GM18951 (cell line): ENCODE measurements at regions of chr1 and their contacts with region 1.

Region 1: DNA sequence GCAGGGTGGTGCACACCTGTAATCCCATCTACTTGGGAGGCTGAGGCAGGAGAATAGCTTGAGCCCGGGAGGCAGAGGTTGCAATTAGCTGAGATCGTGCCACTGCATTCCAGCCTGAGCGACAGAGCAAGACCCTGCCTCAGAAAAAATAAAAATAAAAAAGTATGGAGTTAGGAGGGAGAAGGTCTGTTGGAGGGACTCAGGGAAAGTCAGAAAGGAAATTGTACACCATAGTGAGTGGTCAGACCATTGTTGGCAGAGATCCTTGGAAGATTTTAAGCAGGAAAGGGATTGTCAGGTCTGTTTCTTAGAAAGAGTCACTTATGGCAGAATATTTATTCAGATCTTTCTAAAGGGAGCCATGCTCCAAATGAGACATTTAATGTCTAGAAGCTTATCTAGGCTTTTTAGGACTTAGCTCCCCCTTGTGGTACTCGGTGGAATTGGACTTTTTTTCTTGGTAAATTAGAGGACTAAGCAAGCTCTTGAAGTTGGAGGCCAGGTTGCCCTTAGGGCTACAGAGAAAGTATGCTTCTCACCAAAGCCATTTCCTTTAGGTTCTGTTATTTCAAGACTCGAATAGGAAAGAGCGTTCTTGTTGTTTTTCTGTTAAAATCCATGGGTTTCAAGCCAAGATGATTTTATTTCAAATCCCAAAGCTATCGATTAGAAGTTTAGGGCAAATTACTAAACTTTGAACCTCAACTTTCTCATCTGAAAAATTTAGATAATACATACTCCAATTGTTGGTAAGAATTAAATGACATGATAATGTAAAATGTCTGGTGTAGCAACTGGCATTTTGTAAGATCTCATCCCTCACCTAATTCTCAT is 16.5 kb downstream of the MIA3 start:
- POLR2A ChIP-seq: no peak

Region 2: GRCh38 chr1:222455188-222455879 is 179.1 kb before region 1 on chr1:
- in situ Hi-C with region 1: loop called (anchors 5 kb)
- POLR2A ChIP-seq: no peak